ENCODE measurements at regions of chr15 and their contacts with region 1.

Region 1: DNA sequence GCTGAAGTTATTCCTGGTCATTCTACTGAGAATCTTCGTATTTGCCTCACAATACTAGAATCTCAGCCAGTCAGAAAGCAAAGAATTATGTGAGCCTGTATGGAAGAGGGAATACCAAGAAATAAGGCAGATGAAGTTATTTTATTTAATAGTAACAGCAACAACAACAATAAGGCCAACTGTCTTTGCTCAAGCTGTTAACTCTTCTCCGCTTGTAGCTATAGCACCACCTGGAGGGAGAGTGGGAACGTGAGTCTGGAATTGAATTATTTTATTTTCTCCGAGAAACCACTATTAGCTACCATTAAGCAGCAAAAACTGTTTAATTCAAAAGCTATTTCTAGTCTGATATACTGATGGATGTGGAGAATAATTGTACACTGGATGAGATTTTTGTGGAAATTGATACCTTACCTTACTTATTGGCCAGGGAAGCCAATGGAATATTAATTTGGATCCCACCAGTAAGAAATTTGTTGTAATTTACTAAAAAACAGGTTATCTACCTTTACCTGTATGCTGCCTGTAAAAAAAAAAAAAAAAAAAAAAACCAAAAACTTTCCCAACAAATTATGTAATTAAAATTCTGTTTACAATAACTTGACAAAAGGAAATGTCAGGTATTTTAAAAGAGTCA is 50.1 kb downstream of the CALML4 start:
- DNase-seq: peak; percentile 33
- H3K4me3 ChIP-seq: no peak overlapping the region
- H3K27ac ChIP-seq: no peak overlapping the region
- H3K4me1 ChIP-seq: peaks cover 0 to 8% (median 2%) of the 10 kb centered on the region in 4 donors
- H3K27me3 ChIP-seq: no peaks in the 10 kb centered on the region
- CTCF ChIP-seq: peak; percentile 68 to 82 (median 73)
- EP300 ChIP-seq: no peak
- POLR2A ChIP-seq: no peak

Region 2: GRCh38 chr15:68053701-68054627 is 101.1 kb before region 1 on chr15 and contains the start of gene PIAS1:
- in situ Hi-C with region 1: loop called in 1 of 4 experiments (anchors 25 kb)
- intact Hi-C with region 1: no loop called
- DNase-seq: peak; percentile 95
- H3K4me3 ChIP-seq: peak within 1 kb of the TSS; percentile 88 to 98 (median 96)
- H3K27ac ChIP-seq: peak within 1 kb of the TSS; percentile 92 to 98 (median 96)
- H3K4me1 ChIP-seq: peaks cover 0 to 37% (median 32%) of the 10 kb centered on the region in 4 donors
- H3K27me3 ChIP-seq: no peaks in the 10 kb centered on the region
- CTCF ChIP-seq: peak in 2 of 5 experiments; percentile 10 to 17
- EP300 ChIP-seq: no peak
- POLR2A ChIP-seq: peak; percentile 94
- total RNA-seq, gene PIAS1: 34.0 to 141 (median 55.4) TPM

Region 3: DNA sequence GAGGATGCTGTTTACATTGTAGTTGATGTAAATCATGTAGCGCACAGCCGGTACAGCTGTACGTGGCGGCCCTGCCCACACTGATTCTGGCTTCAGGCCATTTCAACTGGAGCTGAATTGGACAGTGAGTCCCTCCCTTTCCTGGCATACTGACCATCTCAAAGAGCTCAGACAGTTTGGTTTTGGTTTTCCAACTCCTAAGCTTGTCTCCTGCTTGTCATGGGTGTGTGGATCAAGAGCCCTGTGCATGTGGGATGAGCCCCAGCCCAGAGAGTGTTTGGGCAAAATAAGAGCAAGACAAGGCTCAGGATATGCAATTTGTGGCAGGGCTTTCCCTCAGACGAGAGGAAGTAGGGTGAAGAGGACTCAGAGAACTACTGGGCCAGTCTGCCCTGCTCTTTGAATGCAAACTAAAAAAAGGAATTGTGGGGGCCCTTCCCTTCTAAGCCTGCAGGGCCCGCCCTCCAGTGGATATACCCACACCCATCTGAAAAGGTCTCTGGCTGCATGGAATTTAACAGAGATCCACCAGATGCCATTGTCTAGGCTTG is 263.6 kb after region 1 on chr15:
- in situ Hi-C with region 1: no loop called
- intact Hi-C with region 1: no loop called
- DNase-seq: peak; percentile 65
- H3K4me3 ChIP-seq: no peak overlapping the region
- H3K27ac ChIP-seq: peak overlapping the region in 3 of 4 donors; percentile 44 to 65 (median 65)
- H3K4me1 ChIP-seq: peaks cover 10 to 39% (median 22%) of the 10 kb centered on the region in 4 donors
- H3K27me3 ChIP-seq: no peaks in the 10 kb centered on the region
- CTCF ChIP-seq: no peak
- EP300 ChIP-seq: no peak
- POLR2A ChIP-seq: no peak

Measured in transverse colon (tissue), 4 donors.